ENCODE measurements at regions of chr19 and their contacts with region 1.

Region 1: GRCh38 chr19:46404055-46404752 is 9.2 kb downstream of the CCDC8 start:
- H3K4me3 ChIP-seq: no peak overlapping the region
- H3K27ac ChIP-seq: no peak overlapping the region
- H3K4me1 ChIP-seq: peaks cover 3% of the 10 kb centered on the region; the same call in 1 of the 2 replicates
- CTCF ChIP-seq: no peak

Region 2: DNA sequence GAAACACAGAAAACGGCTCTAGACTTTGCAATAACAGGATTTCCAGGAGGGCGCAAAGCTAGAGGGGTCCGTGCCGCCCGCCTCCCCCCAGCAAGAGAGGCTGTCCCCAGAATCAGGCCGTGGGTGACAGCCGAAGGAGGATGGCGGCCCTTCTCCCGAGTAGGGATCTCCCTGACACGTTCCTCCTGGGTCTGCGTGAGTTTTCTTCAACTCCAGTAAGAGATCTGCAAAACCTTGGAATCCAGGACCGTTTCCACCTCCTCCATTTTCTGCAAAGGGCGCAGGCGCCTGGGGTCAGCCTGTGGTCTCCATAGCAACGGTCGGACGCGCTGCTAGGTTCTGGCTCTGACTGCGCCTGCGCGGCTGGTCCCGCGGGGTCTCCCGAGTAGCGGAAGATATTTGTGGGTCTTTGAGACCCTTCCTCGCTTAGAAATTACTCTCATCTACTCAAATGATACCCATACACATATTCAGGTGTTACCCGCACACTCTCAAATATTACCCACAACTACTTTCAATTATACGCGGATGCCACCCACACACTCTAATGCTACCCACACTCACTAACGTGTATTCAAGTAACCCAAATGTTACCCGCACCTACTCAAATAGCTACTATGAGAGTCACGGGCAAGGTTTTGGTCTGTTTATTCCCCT is 22.4 kb after region 1 on chr19:
- CTCF ChIA-PET with region 1: interaction called, 25 read pairs
- POLR2A ChIA-PET with region 1: interaction called, 3 read pairs
- H3K4me3 ChIP-seq: peak overlapping the region; percentile 30
- H3K27ac ChIP-seq: no peak overlapping the region; the same call in 1 of the 2 replicates
- H3K4me1 ChIP-seq: peaks cover 7% of the 10 kb centered on the region
- CTCF ChIP-seq: no peak

Region 3: DNA sequence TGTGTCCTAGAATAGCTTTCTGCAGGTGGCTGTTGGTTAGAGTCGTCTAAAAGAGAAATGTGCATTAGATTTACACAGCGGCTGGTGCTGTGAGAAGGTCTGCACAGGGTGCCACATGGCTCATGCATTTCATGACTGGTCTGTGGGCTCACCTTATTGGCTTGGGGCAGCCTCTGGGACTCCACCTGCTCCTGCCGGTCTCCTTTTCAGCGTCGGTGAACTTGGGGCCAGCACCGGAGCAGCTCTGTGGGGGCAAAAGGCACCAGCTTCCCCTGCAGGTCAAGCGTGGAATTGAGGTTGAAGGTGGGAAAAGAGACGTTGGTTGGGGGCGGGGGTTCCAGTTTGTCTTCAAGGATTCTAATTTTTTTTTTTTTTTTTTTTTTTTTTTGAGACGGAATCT is 27.6 kb after region 1 on chr19:
- CTCF ChIA-PET with region 1: interaction called, 25 read pairs
- POLR2A ChIA-PET with region 1: interaction called, 3 read pairs
- H3K4me3 ChIP-seq: no peak overlapping the region
- H3K27ac ChIP-seq: no peak overlapping the region
- H3K4me1 ChIP-seq: no peaks in the 10 kb centered on the region; the same call in 1 of the 2 replicates
- CTCF ChIP-seq: no peak

Region 4: GRCh38 chr19:46480415-46480814 is 76.2 kb after region 1 on chr19:
- CTCF ChIA-PET with region 1: interaction called, 46 read pairs
- POLR2A ChIA-PET with region 1: interaction called, 3 read pairs
- H3K4me3 ChIP-seq: no peak overlapping the region
- H3K27ac ChIP-seq: no peak overlapping the region
- H3K4me1 ChIP-seq: peaks cover 6% of the 10 kb centered on the region
- CTCF ChIP-seq: no peak

Region 5: DNA sequence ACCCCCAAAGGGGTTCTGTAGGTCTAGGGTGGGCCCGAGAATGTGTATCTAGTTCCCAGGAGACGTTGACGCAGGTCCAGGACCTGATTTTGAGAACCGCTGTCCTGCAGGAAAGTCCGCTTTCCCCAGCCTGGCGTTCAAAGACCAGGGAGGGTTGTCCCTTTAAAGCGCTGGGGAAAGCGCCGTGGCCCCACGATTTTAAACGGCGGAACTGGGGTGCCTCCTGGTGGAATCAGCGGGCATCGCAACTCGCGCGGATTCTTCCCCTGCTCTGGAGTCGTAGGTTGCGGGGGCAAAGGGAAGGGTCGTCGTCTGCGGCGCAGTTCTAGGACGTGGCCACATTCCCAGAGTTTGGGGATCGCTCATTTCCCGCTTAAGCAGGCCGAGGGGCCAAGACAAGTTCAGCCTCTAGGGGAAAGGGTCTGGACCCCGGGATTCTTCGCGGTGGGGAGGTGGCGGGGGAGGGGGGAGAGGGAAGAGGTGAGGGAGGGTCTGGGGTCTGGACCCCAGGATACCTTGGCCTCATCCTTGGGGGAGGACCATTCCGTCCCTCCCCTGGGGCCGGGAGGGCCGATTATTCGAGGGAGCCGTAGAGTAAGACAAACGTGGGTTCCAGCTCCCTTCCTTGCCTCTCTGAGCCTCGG is 83.7 kb after region 1 on chr19:
- CTCF ChIA-PET with region 1: interaction called, 89 read pairs
- POLR2A ChIA-PET with region 1: interaction called, 3 read pairs
- H3K4me3 ChIP-seq: peak overlapping the region; percentile 11
- H3K27ac ChIP-seq: no peak overlapping the region
- H3K4me1 ChIP-seq: peaks cover 5% of the 10 kb centered on the region; the same call in 1 of the 2 replicates
- CTCF ChIP-seq: peak; percentile 91